ENCODE measurements at regions of chr16 and their contacts with region 1.

Region 1: GRCh38 chr16:66552286-66553177 is at the start of gene CKLF:
- DNase-seq: peak; percentile 95
- ATAC-seq: peak; percentile 87
- total RNA-seq, gene CKLF: 9.1 TPM

Region 2: DNA sequence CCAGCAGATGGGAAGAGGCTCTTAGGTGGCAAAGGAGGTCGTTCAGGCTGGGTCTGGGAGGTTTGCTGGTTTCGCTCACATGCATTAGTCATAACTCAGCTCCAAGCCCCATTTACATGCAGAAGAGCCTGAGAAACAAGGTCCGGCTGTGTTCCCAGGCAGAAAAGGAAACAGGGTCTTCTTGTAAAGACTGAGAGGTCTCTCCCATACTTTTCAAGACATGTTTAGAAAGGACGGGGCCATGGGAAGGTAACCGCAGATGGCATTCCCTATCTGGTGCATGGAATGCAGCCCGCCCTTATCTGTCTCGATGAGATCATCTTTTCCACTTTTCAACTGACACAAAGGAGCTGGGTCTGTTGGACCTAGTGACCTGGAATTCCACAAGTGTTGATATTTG is 1041.7 kb before region 1 on chr16:
- intact Hi-C with region 1: no loop called
- DNase-seq: no peak
- ATAC-seq: peak; percentile 40

Region 3: GRCh38 chr16:66502020-66502913 is 50.3 kb before region 1 on chr16:
- intact Hi-C with region 1: no loop called
- DNase-seq: peak; percentile 74
- ATAC-seq: peak; percentile 92

Region 4: DNA sequence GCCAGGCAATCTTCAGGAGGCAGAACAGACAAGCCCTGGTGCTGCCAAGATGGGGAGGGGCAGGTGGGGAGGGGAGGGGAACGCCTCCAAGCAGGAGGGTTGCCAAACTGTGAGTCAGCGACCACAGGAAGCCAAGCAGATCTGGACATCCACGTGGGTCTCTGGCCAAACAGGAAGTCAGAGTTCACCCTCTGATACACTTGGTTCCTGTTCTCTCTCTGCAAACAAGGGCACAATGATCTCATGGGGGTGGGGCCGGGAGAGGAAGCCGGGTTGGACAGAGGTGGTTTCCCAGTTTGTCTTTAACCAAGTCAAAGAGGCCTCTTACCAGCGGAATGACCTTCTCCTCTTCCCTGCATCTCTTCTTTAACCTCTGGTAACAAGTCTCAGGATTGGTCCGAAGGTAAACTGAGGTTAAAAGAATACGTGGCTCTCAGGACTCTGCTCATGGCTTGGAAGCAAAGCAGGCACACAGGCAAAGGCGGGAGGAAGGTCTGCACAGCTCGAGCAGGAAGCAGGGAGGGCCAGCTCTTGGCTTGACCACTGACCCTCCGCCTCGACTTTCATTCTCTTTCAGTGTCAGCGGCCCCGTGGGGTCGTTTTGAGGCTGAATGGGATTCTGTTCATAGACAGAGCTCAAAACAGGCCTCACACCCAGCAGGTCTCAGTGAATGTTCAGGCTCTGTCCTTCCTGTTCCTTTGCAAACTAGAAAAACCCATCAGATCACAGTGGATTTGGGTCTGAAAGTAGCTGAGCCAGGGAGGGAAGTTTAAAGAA is 35.5 kb before region 1 on chr16:
- intact Hi-C with region 1: loop called (anchors 5 kb)
- DNase-seq: peak; percentile 96
- ATAC-seq: peak; percentile 94

Region 5: GRCh38 chr16:66635406-66635805 is 82.9 kb after region 1 on chr16:
- intact Hi-C with region 1: no loop called
- DNase-seq: no peak
- ATAC-seq: no peak

Measured in left ventricle myocardium superior (tissue), 1 donor.